GM10248 (cell line): ENCODE measurements at regions of chr10 and their contacts with region 1.

Region 1: DNA sequence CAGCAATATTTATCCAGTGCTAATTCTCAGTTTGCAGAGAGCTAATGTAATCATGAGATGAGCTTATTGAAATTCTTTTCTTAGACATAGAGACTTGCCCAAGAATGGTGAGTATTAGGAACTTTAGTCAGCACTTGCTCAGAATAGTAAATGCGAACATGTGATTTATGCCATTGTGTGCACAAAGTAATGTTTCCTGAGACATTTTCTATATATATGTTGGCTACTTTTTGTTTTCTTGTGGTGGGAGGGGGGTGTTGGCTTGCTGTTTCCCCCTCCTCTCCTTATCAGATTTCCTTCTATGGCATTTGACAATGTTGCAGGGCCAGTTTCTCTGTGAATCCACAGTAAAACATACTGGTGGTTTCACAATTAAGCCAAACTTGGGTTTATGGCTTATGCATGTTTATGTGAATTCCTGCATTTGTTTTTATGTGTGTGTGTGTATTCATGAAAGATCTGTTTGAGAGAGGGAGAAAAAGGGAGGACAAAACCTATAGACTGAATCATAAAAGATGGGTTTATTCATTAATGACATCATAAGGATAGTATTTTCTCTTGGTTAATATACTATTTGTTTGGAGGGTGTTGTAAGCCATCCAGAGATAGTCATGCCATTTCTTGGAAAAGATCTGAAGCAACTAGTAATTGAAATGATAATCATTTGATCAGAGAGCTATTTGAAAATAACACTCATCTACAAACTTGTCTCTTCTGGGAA is 36.3 kb downstream of the ARID5B start:
- DNase-seq: no peak
- CTCF ChIP-seq: no peak

Region 2: GRCh38 chr10:61606951-61607907 is 330.6 kb before region 1 on chr10:
- CTCF ChIA-PET with region 1: no interaction called
- POLR2A ChIA-PET with region 1: no interaction called
- DNase-seq: no peak
- CTCF ChIP-seq: peak; percentile 19

Region 3: GRCh38 chr10:61903221-61903927 is 34.4 kb before region 1 on chr10:
- CTCF ChIA-PET with region 1: interaction called, 25 read pairs
- POLR2A ChIA-PET with region 1: no interaction called
- DNase-seq: peak; percentile 69
- CTCF ChIP-seq: no peak

Region 4: DNA sequence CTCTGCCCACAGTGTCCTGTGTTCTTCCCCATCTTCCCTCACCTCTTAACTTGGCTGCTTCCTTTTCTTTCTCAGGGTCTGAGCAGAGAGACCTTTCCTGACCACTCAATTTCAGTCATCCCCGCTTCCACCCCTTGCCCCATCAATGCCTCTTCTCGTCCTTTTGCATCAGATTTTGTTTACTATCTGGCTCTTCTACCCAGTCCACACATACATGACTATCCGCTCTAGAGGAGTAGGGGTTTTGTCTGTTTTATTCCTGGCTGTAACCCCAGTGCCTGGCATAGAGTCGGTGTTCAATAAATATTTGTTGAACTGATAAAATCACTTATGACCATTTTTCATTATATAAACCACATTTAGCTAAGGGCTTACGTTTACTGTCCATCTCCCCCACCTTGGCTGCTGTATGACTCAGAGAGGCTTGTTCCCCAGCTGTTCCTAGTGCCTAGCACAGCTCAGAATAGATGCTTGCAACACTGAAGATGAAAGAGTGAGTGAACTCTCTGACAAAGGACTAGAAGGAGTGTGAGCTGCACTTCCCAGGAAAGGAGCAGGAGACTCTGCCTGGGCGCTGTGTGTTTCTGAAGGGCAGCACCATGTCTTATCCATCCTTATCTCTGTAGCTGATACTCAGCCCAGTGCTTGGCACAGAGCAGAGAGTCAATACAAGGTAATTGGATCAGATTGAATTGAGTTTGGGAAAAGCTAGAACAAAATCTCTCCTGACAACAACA is 14.4 kb before region 1 on chr10:
- CTCF ChIA-PET with region 1: interaction called, 13 read pairs
- POLR2A ChIA-PET with region 1: no interaction called
- DNase-seq: no peak
- CTCF ChIP-seq: no peak